Left lung (tissue), 14 donors: ENCODE measurements at regions of chr2 and their contacts with region 1.

Region 1: DNA sequence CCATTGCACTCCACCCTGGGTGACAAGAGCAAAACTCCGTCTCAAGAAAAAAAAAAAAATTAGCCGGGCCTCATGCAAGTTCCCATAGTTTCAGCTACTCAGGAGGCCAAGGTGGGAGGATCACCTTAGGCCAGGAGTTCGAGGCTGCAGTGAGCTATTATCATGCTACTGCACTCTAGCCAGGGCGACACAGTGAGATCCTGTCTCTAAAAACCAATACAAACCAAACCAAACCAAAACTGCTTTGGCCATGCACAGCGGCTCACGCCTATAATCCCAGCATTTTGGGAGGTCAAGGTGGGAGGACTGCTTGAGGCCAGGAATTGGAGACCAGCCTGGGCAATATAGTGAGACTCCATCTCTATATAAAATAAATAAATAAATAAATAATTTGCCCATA is 19.1 kb downstream of the NIFK start:
- DNase-seq: no peak
- ATAC-seq: no peak
- H3K4me3 ChIP-seq: no peak overlapping the region
- H3K27ac ChIP-seq: no peak overlapping the region
- H3K4me1 ChIP-seq: peaks cover 0 to 5% of the 10 kb centered on the region in 2 donors
- H3K27me3 ChIP-seq: no peaks in the 10 kb centered on the region
- CTCF ChIP-seq: no peak

Region 2: GRCh38 chr2:121400201-121400600 is 317.3 kb before region 1 on chr2:
- intact Hi-C with region 1: loop called in 1 of 2 experiments (anchors 5 kb)
- DNase-seq: no peak
- ATAC-seq: no peak
- H3K4me3 ChIP-seq: no peak overlapping the region
- H3K27ac ChIP-seq: no peak overlapping the region
- H3K4me1 ChIP-seq: peaks cover 0 to 9% of the 10 kb centered on the region in 2 donors
- H3K27me3 ChIP-seq: no peaks in the 10 kb centered on the region
- CTCF ChIP-seq: no peak

Region 3: GRCh38 chr2:121777699-121778058 is 60.1 kb after region 1 on chr2:
- intact Hi-C with region 1: no loop called
- DNase-seq: peak in 1 of 4 donors; percentile 48
- ATAC-seq: no peak
- H3K4me3 ChIP-seq: no peak overlapping the region
- H3K27ac ChIP-seq: no peak overlapping the region
- H3K4me1 ChIP-seq: no peaks in the 10 kb centered on the region
- H3K27me3 ChIP-seq: no peaks in the 10 kb centered on the region
- CTCF ChIP-seq: no peak